ENCODE measurements at regions of chr20 and their contacts with region 1.

Region 1: DNA sequence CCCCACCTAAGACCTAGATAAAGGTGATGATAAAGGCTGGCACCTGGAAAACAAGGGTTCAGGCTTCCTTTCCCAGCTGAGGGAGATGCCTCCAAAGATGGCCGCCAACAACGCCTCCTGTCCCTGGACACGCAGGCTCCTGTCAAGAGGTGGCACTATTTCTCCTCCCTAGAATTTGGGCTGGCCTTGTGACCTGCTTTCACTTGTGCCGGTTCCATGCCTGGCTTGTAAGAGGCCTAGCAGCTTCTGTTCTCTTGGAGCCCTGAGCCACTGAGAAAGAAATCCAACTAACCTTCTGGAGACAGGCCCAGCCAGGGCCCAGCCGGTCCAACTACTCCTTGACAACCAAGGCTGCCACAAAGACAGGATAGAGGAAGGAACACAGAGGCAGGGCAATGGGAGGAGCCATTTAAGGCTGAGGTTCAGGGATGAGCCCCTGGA is 60.2 kb upstream of the RALY start:
- DNase-seq: peak; percentile 14 to 62 (median 48)
- ATAC-seq: peak; percentile 71
- H3K4me3 ChIP-seq: no peak overlapping the region
- H3K4me3 Mint-ChIP-seq: no peak overlapping the region
- H3K27ac ChIP-seq: peak overlapping the region; percentile 13
- H3K27ac Mint-ChIP-seq: peak overlapping the region in 1 of 9 donors; percentile 27
- H3K4me1 ChIP-seq: no peaks in the 10 kb centered on the region
- H3K4me1 Mint-ChIP-seq: peaks cover 0 to 2% (median 0%) of the 10 kb centered on the region in 7 donors
- H3K27me3 ChIP-seq: no peaks in the 10 kb centered on the region
- H3K27me3 Mint-ChIP-seq: peaks cover 0 to 3% (median 0%) of the 10 kb centered on the region in 5 donors

Region 2: DNA sequence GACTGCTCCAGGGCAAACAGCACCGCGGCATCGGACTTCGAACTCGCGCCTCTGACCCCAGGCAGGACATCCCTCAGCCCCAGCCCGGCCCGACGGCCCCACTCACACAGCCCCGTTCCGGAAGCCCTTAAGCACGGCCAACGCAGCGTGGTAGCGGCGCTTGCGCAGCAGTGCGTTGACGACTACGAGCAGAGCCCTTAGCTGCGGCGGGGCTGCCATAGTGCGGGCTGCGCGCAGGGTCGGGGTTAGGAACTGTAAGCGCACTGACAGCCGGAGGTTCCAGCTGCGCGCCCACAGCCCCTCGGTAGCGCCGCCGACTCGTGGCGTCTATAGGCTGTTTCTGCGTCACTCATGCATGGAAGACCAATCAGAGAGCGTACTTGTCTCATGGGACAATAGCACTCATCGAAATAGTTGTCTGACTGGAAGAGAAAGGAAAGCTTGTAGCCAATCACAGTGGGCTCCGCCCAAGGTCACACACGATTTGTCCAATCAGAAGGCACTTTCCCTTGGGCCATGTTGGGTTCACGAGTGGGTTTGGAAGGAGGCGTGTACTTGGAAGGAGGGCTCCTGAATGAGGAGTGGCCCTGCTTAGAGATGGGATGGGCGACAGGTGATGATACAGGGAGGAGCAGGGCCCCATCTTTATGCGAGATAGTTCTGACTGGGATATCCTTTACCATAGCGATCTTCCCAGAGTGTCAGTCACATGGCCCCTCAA is 213.3 kb before region 1 on chr20 and contains the start of gene PXMP4:
- CTCF ChIA-PET with region 1: no interaction called
- POLR2A ChIA-PET with region 1: no interaction called
- intact Hi-C with region 1: no loop called
- DNase-seq: peak; percentile 60 to 97 (median 94)
- ATAC-seq: peak; percentile 98
- H3K4me3 ChIP-seq: peak within 1 kb of the TSS; percentile 87
- H3K4me3 Mint-ChIP-seq: peak within 1 kb of the TSS; percentile 81 to 95 (median 90)
- H3K27ac ChIP-seq: peak within 1 kb of the TSS; percentile 74
- H3K27ac Mint-ChIP-seq: peak within 1 kb of the TSS; percentile 81 to 97 (median 87)
- H3K4me1 ChIP-seq: peaks cover 0 to 22% of the 10 kb centered on the region in 2 donors
- H3K4me1 Mint-ChIP-seq: peaks cover 22 to 36% (median 27%) of the 10 kb centered on the region in 7 donors
- H3K27me3 ChIP-seq: no peaks in the 10 kb centered on the region
- H3K27me3 Mint-ChIP-seq: no peaks in the 10 kb centered on the region
- total RNA-seq, gene PXMP4: 4.5 to 14.3 (median 10.1) TPM

Region 3: DNA sequence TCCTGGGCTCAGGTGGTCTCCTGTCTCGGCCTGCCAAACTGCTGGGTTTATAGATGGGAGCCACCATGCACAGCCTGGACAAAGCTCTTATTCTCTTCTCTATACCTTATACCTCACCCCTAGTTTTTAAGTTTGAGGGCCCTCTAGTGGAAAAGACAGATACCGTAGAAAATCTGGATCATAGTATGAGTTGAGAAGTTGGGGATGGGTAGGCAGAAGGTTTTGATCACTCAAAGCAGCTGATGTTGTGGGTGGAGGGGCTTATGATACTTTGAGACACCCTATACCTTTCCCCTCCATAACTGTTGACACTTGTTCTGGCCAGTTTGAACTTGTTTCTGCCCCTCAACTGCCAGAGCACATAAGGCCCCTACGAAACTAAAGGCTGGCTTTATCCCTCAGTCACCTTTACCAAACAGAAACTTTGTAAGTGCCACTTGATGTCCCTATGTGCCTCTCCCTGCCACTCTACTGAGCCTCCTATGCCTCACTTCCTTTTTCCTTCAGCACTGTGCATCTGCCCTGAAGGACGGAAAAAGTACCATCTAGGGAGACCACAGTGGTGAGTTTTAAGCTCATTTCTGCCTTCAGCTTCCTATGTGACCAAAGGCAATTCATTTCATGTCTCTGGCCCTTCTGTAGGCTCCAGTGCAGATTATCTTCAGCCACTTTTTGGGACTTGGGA is 88.8 kb after region 1 on chr20:
- CTCF ChIA-PET with region 1: no interaction called
- POLR2A ChIA-PET with region 1: no interaction called
- intact Hi-C with region 1: loop called in 1 of 2 experiments (anchors 10 kb)
- DNase-seq: peak in 7 of 9 donors; percentile 2 to 32 (median 18)
- ATAC-seq: peak; percentile 69
- H3K4me3 ChIP-seq: no peak overlapping the region
- H3K4me3 Mint-ChIP-seq: peak overlapping the region in 4 of 10 donors; percentile 3 to 19 (median 12)
- H3K27ac ChIP-seq: no peak overlapping the region
- H3K27ac Mint-ChIP-seq: peak overlapping the region; percentile 21 to 76 (median 68)
- H3K4me1 ChIP-seq: peaks cover 29 to 50% of the 10 kb centered on the region in 2 donors
- H3K4me1 Mint-ChIP-seq: peaks cover 59 to 93% (median 88%) of the 10 kb centered on the region in 7 donors
- H3K27me3 ChIP-seq: no peaks in the 10 kb centered on the region
- H3K27me3 Mint-ChIP-seq: no peaks in the 10 kb centered on the region

Region 4: GRCh38 chr20:34179637-34180360 is 246.3 kb after region 1 on chr20:
- CTCF ChIA-PET with region 1: no interaction called
- POLR2A ChIA-PET with region 1: no interaction called
- intact Hi-C with region 1: no loop called
- DNase-seq: no peak
- ATAC-seq: no peak
- H3K4me3 ChIP-seq: no peak overlapping the region
- H3K4me3 Mint-ChIP-seq: no peak overlapping the region
- H3K27ac ChIP-seq: no peak overlapping the region
- H3K27ac Mint-ChIP-seq: no peak overlapping the region
- H3K4me1 ChIP-seq: no peaks in the 10 kb centered on the region
- H3K4me1 Mint-ChIP-seq: no peaks in the 10 kb centered on the region
- H3K27me3 ChIP-seq: no peaks in the 10 kb centered on the region
- H3K27me3 Mint-ChIP-seq: peaks cover 0 to 13% (median 6%) of the 10 kb centered on the region in 5 donors